Common myeloid progenitor, CD34-positive (primary cell): ENCODE measurements at regions of chr6 and their contacts with region 1.

Region 1: DNA sequence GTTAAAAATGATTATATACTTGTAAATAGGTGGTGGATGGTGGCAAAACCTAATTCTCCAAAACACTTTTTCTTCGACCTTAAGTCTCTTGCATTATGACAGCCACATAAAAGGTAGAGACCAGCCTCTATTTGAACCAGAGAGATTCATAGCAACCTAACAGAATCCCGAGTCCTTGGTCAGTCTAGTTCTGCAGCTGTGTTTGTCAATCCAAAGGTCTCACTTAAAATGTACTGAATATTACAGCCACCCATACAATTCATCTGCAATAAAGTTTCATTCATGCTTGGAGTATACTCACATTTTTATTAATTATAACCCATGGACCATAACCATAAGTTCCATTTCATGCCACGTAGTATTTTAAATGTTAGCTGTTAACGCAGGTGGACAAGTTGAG is 87.2 kb downstream of the EPM2A start:
- DNase-seq: no peak
- H3K4me3 ChIP-seq: no peak overlapping the region
- H3K27ac ChIP-seq: no peak overlapping the region
- H3K4me1 ChIP-seq: no peaks in the 10 kb centered on the region
- H3K27me3 ChIP-seq: no peaks in the 10 kb centered on the region

Region 2: GRCh38 chr6:145633981-145634627 is 14.0 kb before region 1 on chr6:
- CTCF ChIA-PET with region 1: interaction called, 10 read pairs
- POLR2A ChIA-PET with region 1: no interaction called
- DNase-seq: peak; percentile 62 to 78 (median 65)
- H3K4me3 ChIP-seq: no peak overlapping the region
- H3K27ac ChIP-seq: no peak overlapping the region
- H3K4me1 ChIP-seq: no peaks in the 10 kb centered on the region
- H3K27me3 ChIP-seq: no peaks in the 10 kb centered on the region